A549 (cell line): ENCODE measurements at regions of chr17 and their contacts with region 1.

Region 1: GRCh38 chr17:46803559-46803958 is 14.9 kb downstream of the WNT3 start:
- DNase-seq: no peak
- ATAC-seq: peak; percentile 25 to 27; a peak in 1 of 6 replicates
- H3K4me3 ChIP-seq: no peak overlapping the region
- H3K27ac ChIP-seq: no peak overlapping the region
- H3K4me1 ChIP-seq: no peaks in the 10 kb centered on the region
- CTCF ChIP-seq: no peak
- EP300 ChIP-seq: no peak
- POLR2A ChIP-seq: no peak
- RAD21 ChIP-seq: no peak

Region 2: GRCh38 chr17:46782250-46782953 is 21.2 kb before region 1 on chr17:
- CTCF ChIA-PET with region 1: interaction called, 13 read pairs
- POLR2A ChIA-PET with region 1: no interaction called
- DNase-seq: peak; percentile 67 to 74
- ATAC-seq: peak; percentile 85 to 93
- H3K4me3 ChIP-seq: no peak overlapping the region
- H3K27ac ChIP-seq: peak overlapping the region in 1 of 2 experiments; percentile 68; a peak in 3 of 6 replicates
- H3K4me1 ChIP-seq: 0 out of 3 replicates have a peak, but pooled peaks cover 3% of the 10 kb centered on the region
- CTCF ChIP-seq: peak; percentile 86
- EP300 ChIP-seq: no peak
- POLR2A ChIP-seq: no peak
- RAD21 ChIP-seq: peak; percentile 90

Region 3: GRCh38 chr17:46822388-46822921 is 18.9 kb after region 1 on chr17:
- CTCF ChIA-PET with region 1: interaction called, 16 read pairs
- POLR2A ChIA-PET with region 1: no interaction called
- DNase-seq: peak in 1 of 2 experiments; percentile 45
- ATAC-seq: peak; percentile 19 to 70; a peak in 4 of 6 replicates
- H3K4me3 ChIP-seq: 0 out of 3 replicates have a peak overlapping the region, but pooled peaks have one; percentile 16
- H3K27ac ChIP-seq: peak overlapping the region in 1 of 2 experiments; percentile 44; a peak in 1 of 6 replicates
- H3K4me1 ChIP-seq: no peaks in the 10 kb centered on the region
- CTCF ChIP-seq: peak; percentile 91
- EP300 ChIP-seq: no peak
- POLR2A ChIP-seq: no peak
- RAD21 ChIP-seq: peak; percentile 71 to 75

Region 4: GRCh38 chr17:46853896-46854444 is 50.4 kb after region 1 on chr17:
- CTCF ChIA-PET with region 1: no interaction called
- POLR2A ChIA-PET with region 1: no interaction called
- DNase-seq: no peak
- ATAC-seq: no peak
- H3K4me3 ChIP-seq: no peak overlapping the region
- H3K27ac ChIP-seq: no peak overlapping the region
- H3K4me1 ChIP-seq: peaks cover 5% of the 10 kb centered on the region; the same call in 1 of the 3 replicates
- CTCF ChIP-seq: no peak
- EP300 ChIP-seq: no peak
- POLR2A ChIP-seq: no peak
- RAD21 ChIP-seq: no peak